K562 (cell line): ENCODE measurements at regions of chr3 and their contacts with region 1.

Region 1: GRCh38 chr3:44455318-44455717 is 22.2 kb downstream of the ZNF445 start:
- DNase-seq: no peak
- ATAC-seq: no peak
- H3K4me3 ChIP-seq: no peak overlapping the region
- H3K27ac ChIP-seq: no peak overlapping the region
- H3K4me1 ChIP-seq: peaks cover 0 to 5% of the 10 kb centered on the region in 2 experiments; a peak in 1 of 5 replicates
- H3K27me3 ChIP-seq: no peaks in the 10 kb centered on the region
- CTCF ChIP-seq: no peak
- EP300 ChIP-seq: no peak
- POLR2A ChIP-seq: no peak
- RAD21 ChIP-seq: no peak

Region 2: DNA sequence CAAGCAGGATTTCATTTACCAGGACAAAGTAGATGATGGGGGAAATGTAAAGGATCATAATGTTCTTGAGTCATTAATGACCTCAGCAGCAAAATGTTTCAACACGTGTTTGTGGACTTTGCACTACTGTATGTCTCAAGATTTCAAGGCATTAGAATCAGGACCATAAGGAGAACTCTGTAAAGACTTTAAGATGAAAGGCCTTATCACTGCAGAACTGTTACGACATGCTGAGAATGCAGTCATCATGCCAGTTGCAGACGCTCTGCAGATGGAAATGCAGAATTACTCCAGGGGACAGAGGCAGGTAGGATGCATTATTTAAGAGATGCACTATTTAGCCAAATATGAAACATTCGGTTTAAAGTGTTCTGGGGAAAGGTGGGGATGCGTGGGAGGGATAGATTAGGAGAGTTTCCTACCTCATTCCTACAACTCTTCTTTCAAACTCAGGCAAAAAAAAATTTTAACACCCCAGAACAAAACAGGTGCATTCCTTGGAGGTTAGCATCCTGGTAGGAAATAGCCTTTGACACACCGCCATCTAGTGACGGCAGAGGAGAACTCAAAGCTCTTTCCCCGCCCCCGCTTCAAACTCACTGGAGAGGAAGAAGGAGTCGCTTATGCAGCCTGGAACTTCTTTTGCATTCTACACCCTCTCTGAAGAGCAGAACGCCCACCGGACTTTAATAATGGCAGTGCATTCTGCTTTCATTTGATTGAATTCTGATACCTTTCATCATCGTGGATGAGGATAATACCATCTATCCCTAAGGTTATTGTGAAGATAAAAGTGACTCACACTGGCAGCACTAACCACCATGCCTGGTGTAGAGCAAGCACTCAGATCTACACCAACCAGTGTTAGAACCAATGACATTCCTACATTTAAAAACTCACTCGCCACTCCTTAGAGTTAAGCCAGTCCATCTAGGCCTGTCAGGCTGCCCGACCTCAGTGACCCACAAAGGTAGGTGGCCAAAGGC is 256.7 kb before region 1 on chr3:
- CTCF ChIA-PET with region 1: no interaction called
- POLR2A ChIA-PET with region 1: no interaction called
- in situ Hi-C with region 1: no loop called
- intact Hi-C with region 1: no loop called
- DNase-seq: peak; percentile 62 to 84 (median 72)
- ATAC-seq: peak; percentile 99
- H3K4me3 ChIP-seq: no peak overlapping the region
- H3K27ac ChIP-seq: no peak overlapping the region
- H3K4me1 ChIP-seq: no peaks in the 10 kb centered on the region; a peak in 1 of 5 replicates
- H3K27me3 ChIP-seq: peaks cover 0 to 7% of the 10 kb centered on the region in 2 experiments; a peak in 2 of 5 replicates
- CTCF ChIP-seq: peak; percentile 84 to 95 (median 88)
- EP300 ChIP-seq: no peak
- POLR2A ChIP-seq: no peak
- RAD21 ChIP-seq: peak; percentile 90 to 92

Region 3: DNA sequence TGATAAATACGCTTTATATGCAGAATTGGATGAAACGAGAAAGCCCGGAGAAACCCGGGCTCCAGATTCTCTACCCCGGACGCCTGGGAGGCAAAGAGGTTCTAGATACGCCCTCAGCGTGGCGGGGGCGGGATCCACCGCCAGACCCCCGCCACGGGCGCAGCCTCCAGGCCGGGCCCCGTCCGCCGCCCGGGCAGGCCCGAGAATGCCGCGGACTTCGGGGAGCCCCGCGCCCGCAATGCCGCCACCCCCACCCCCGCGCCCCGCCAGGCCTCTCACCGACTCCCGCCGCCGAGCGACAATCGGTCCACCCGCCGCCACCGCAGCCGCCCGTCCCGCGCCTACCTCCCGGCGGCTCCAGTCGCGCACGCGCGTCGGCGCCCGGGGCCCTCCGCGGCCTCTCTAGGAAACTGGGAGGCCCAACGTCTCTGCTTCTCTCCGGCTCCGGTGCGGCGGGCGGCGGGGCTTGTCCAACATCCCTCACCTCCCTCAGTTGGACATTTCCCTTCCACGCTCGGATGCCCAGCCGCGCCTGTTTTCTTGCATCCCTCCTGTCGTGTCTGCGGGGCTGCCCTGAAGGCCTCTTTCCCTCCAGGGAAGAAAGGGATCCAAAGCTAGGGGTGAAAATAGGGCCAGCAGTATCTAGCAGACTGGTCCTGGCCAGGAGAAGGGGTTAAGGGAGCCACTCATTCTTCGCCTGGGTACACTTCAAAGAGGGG is 22.2 kb after region 1 on chr3 and contains the start of gene ZNF445:
- CTCF ChIA-PET with region 1: no interaction called
- POLR2A ChIA-PET with region 1: interaction called, 10 read pairs
- in situ Hi-C with region 1: no loop called
- intact Hi-C with region 1: no loop called
- DNase-seq: peak; percentile 91 to 96 (median 95)
- ATAC-seq: peak; percentile 94
- H3K4me3 ChIP-seq: peak within 1 kb of the TSS; percentile 82
- H3K27ac ChIP-seq: peak within 1 kb of the TSS; percentile 72
- H3K4me1 ChIP-seq: peaks cover 12 to 24% of the 10 kb centered on the region in 2 experiments; a peak in 4 of 5 replicates
- H3K27me3 ChIP-seq: no peaks in the 10 kb centered on the region
- CTCF ChIP-seq: no peak
- EP300 ChIP-seq: peak; percentile 11; the same call in 1 of the 2 replicates
- POLR2A ChIP-seq: peak; percentile 76
- RAD21 ChIP-seq: no peak
- polyA plus RNA-seq, gene ZNF445: 1.2 to 1.8 TPM

Region 4: DNA sequence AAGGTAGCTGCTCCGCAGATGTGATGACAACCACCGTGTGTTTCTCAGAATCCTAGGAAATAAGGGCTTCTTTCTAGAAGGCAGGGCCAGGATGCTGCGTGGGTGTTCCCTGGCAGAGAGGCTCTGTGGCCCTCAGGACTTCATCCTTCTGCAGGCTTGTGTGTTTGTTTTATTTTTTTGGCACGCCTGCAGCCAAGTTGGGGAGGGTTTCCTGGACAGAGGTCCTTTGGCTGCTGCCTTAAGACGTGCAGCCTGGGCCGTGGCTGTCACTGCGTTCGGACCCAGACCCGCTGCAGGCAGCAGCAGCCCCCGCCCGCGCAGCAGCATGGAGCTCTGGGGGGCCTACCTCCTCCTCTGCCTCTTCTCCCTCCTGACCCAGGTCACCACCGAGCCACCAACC is 570.7 kb after region 1 on chr3 and contains the start of gene CLEC3B:
- CTCF ChIA-PET with region 1: no interaction called
- POLR2A ChIA-PET with region 1: no interaction called
- in situ Hi-C with region 1: no loop called
- intact Hi-C with region 1: no loop called
- DNase-seq: no peak
- ATAC-seq: no peak
- H3K4me3 ChIP-seq: no peak within 1 kb of the TSS
- H3K27ac ChIP-seq: no peak within 1 kb of the TSS
- H3K4me1 ChIP-seq: peaks cover 4 to 7% of the 10 kb centered on the region in 2 experiments; a peak in 3 of 5 replicates
- H3K27me3 ChIP-seq: peaks cover 6 to 27% of the 10 kb centered on the region in 2 experiments; a peak in 3 of 5 replicates
- CTCF ChIP-seq: no peak
- EP300 ChIP-seq: no peak
- POLR2A ChIP-seq: no peak
- RAD21 ChIP-seq: no peak
- polyA plus RNA-seq, gene CLEC3B: not detected